BJ (cell line): ENCODE measurements at regions of chr2 and their contacts with region 1.

Region 1: DNA sequence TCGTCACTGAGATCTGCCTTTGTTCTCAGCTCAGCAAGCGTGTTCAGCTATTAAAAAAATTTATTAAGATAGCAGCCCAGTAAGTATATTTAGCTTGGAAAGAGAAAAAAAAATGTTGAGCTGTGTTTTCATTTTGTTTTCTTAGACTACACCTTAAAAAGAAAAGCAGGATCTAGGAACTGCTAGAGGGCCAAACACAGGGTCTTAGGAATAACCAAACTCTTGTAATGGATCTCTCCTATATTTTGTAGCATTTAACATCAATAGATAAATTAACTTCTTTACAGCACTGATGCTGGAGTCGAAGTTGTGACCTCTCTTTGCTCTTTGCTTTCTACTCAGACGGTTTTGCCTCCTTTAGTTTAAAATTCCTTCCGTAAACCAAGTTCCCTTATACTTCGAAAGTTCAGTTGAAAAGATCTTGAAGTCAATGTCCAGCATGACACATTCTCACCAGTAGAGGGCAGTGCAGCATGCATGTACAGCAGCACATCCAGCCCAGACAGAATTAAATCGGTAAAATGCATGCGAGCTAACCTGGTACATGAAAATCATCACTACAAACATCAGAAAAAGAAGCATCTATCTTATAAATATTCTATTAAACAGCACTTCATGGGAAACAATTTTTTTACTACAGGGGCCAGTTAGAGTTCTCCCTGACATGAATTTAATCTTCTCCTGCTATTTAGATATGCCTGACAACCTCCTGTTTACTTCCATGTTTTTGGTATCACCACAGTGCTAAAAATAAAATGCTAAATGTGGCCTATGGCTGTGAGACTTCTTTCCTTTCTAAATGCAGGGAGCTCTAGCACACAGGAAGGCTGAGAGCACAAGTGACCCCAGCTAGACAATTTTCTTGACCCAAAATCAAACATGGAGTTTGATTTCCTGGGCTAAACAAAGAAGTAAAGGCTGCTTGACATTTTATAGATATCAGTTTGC is 48.2 kb upstream of the MAP3K20 start:
- DNase-seq: no peak
- H3K4me3 ChIP-seq: no peak overlapping the region
- H3K27me3 ChIP-seq: no peaks in the 10 kb centered on the region
- CTCF ChIP-seq: peak; percentile 83

Region 2: GRCh38 chr2:173043476-173043875 is 16.0 kb after region 1 on chr2:
- CTCF ChIA-PET with region 1: interaction called, 16 read pairs
- POLR2A ChIA-PET with region 1: no interaction called
- DNase-seq: no peak
- H3K4me3 ChIP-seq: no peak overlapping the region
- H3K27me3 ChIP-seq: no peaks in the 10 kb centered on the region
- CTCF ChIP-seq: no peak

Region 3: DNA sequence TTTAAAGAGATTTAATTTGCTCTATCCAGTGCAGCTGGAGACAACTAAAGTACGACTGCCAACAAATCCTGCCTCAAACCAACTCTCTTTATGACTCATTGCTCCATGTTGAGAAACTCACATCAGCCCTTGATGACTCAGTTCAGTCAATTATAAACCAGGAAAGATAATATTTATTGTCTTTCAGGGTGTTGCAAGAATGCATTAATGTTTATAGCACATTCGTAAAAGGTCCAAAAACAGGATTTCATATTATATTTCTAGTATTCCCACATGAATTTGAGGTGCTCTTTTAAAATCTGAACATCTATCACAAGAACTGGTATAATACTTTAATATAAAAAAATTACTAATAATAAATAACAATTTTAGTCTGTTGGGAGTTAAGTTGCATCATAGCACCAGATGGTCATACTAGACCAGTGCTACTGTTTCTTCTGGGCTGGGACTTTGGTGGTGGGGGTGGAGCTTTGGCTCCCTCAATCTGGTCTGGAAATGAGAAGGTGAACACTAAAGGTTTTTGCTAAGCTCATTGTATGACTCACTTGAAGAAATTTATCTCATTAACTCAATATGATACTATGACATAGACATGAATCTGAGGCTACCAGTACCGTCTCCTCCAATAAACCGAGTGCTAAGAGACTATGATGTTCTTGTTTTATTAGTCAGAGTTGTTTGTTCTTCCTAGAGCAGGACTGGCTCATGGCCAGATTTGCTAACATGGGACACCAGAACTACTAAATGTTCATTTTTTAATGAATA is 21.6 kb after region 1 on chr2:
- CTCF ChIA-PET with region 1: interaction called, 16 read pairs
- POLR2A ChIA-PET with region 1: no interaction called
- DNase-seq: peak; percentile 95
- H3K4me3 ChIP-seq: no peak overlapping the region
- H3K27me3 ChIP-seq: no peaks in the 10 kb centered on the region
- CTCF ChIP-seq: no peak

Region 4: GRCh38 chr2:173058673-173059072 is 31.2 kb after region 1 on chr2:
- CTCF ChIA-PET with region 1: interaction called, 10 read pairs
- POLR2A ChIA-PET with region 1: no interaction called
- DNase-seq: no peak
- H3K4me3 ChIP-seq: no peak overlapping the region
- H3K27me3 ChIP-seq: no peaks in the 10 kb centered on the region
- CTCF ChIP-seq: no peak

Region 5: GRCh38 chr2:173210270-173211196 is 183.1 kb after region 1 on chr2:
- CTCF ChIA-PET with region 1: interaction called, 200 read pairs
- POLR2A ChIA-PET with region 1: no interaction called
- DNase-seq: peak; percentile 68
- H3K4me3 ChIP-seq: no peak overlapping the region
- H3K27me3 ChIP-seq: no peaks in the 10 kb centered on the region
- CTCF ChIP-seq: peak; percentile 87

Region 6: DNA sequence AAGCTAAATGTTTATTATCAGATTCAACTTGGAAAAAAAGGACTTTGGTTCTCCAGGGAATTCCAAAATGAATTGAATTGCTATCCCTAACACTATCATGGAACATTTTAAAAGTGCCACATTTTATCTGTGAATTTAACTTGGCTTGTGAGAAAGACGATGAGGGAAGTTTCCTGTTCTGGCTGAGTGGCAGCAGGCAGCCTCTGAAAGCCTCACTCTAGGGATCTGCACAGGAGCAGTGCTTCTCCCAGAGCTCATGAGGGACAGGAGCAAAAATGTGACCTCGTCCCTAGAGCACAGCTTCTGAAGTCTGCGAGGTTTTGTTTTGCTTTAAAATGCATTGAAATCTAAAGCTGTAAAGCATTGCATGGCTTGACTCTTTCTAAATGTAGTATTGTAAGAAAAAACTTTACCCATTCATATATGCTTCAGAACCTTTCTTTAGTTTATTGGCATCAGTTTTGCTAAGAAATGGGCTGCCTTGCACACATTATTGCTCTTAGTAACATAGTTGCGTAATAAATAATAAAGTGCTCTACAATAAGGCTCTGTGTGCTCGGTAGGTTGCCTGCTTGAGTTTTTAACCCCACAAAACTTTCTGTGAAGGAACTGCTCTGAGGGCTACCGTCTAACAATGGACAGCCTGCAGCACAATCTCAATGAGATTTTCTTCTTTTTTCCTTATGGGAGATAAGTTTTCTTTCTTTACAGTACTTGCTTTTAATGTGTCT is 191.0 kb after region 1 on chr2:
- CTCF ChIA-PET with region 1: interaction called, 200 read pairs
- POLR2A ChIA-PET with region 1: no interaction called
- DNase-seq: no peak
- H3K4me3 ChIP-seq: no peak overlapping the region
- H3K27me3 ChIP-seq: no peaks in the 10 kb centered on the region
- CTCF ChIP-seq: no peak

Region 7: DNA sequence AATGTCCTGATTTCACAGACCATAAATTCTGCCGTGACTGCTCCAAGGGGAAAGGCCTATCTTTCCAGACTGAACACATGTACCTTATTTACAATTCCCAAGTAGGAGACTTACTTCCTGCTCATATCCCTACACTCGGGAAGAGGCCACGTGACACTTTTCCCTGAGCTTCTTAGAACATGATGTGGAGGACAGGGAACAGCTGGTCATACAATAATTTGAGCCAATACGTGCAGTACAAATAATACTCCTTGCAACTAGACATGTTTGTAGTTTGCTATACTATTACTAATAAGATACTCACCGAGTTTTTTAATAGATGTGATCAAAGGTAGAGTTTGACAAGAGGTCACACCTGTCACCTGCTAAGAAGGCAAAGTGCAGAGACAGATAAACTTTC is 681.4 kb after region 1 on chr2:
- CTCF ChIA-PET with region 1: no interaction called
- POLR2A ChIA-PET with region 1: no interaction called
- DNase-seq: no peak
- H3K4me3 ChIP-seq: no peak overlapping the region
- H3K27me3 ChIP-seq: no peaks in the 10 kb centered on the region
- CTCF ChIP-seq: no peak